GM10248 (cell line): ENCODE measurements at regions of chr12 and their contacts with region 1.

Region 1: GRCh38 chr12:99043319-99043914 is 398.3 kb downstream of the APAF1 start:
- DNase-seq: peak; percentile 38
- CTCF ChIP-seq: peak; percentile 93

Region 2: GRCh38 chr12:98355322-98355721 is 688.1 kb before region 1 on chr12:
- CTCF ChIA-PET with region 1: no interaction called
- POLR2A ChIA-PET with region 1: no interaction called
- DNase-seq: no peak
- CTCF ChIP-seq: no peak

Region 3: DNA sequence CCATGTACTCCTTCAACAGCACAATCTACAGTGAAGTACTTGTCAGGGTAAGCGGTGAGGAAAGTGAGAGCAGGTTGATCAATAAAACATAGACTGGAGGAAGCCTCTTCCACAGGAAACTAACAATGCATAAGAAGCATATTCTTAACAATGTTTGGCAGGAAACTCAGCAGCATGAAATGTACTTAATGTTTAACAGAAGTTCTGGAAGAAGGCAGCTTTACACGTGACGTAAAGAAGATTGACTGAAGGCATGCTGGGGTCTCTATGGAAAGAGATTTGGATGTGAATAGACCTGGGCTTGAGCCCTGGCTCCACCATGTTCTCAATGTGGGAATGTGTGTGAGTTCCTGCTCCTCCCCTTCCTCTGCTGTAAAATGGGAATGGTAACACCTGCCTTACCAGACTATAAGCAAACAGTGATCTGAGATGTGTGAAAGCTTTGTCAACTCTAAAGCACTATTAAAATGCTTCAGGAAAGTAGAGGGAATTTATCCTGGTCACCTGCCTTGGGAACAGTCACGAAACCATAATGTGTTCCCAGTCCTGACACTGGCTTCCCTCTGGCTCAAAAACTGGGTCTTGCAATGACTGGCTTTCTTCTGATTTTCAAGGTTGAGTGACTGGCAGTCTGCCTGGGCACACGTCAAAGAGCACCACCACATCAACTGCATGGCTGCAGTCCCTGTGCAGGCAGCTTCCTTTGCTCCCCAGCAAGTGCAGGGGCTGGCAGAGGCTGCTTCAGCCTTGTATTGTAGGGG is 13.7 kb before region 1 on chr12:
- CTCF ChIA-PET with region 1: interaction called, 48 read pairs
- POLR2A ChIA-PET with region 1: no interaction called
- DNase-seq: no peak
- CTCF ChIP-seq: no peak

Region 4: DNA sequence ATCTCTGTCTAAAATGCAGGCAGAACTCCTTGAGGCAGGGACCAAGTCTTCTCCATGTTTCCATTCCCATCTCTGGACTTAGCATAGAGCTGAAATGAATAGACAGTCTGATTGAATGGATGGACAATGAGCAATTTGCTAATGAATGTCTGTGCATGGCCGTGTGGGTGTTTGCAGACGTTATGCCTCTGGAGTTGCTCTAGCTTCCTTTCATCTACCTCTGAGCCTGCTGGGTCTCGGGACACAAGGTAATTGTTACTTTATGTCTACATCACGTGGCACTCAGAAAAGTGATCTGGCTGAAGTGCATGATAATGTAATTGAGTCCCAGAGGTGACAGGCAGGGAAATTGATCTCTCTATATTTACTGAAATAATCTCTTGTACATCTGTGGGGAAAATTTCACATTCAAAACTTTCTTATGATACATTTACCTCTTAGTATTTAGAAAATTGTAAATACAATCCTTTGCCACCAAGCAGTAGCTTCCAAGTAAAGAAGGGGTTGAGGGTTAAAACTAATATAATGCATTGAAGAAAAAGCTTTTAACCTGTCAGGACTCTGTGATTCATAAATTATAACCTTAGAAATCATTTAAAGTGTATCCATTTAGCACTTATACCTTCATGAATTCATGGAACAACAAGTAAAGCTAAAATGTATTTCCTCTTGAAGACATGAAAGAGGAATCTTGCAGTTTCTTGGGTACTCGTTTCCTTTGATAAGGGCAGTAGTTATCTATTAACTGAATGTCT is 25.8 kb after region 1 on chr12:
- CTCF ChIA-PET with region 1: interaction called, 14 read pairs
- POLR2A ChIA-PET with region 1: no interaction called
- DNase-seq: no peak
- CTCF ChIP-seq: no peak

Region 5: DNA sequence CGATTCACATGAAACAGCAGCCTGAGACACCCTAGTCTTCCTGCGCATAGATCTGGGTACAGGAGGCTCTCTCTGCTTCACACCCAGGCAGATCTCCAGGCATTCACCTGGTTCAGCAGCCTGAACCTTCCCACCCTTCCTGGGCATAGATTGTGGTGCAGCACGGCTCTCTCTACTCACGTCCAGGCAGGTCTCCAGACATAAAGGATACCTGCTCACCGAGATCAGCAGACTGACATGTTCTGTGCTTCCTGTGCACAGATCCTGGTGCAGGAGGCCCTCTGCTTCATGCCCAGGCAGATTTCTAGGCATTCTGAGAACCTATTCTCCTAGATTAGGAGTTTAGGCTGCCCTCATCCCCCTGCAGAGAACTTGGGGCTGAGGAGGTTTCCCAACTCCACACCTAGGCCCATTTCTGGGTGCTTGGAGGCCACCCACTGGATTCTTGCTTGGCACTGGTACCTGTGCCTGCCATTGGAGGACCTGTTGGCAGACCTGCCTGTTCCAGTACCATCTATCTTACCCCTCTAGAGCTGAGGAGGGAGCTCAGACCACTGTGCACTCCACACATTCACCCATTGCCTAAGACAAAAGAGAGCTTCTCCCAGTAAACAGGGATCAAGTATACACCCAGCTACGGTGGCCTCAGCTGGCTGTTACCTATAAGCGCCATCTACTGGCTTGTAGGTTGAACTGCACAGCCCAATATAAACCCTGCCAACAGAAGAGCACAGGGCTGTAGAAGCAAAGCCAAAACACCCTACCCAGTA is 576.2 kb after region 1 on chr12:
- CTCF ChIA-PET with region 1: interaction called, 43 read pairs
- POLR2A ChIA-PET with region 1: no interaction called
- DNase-seq: peak; percentile 13
- CTCF ChIP-seq: peak; percentile 75

Region 6: GRCh38 chr12:99767809-99768208 is 724.4 kb after region 1 on chr12:
- CTCF ChIA-PET with region 1: interaction called, 27 read pairs
- POLR2A ChIA-PET with region 1: no interaction called
- DNase-seq: peak; percentile 13
- CTCF ChIP-seq: peak; percentile 42